Ovary (tissue), 10 donors: ENCODE measurements at regions of chr19 and their contacts with region 1.

Region 1: DNA sequence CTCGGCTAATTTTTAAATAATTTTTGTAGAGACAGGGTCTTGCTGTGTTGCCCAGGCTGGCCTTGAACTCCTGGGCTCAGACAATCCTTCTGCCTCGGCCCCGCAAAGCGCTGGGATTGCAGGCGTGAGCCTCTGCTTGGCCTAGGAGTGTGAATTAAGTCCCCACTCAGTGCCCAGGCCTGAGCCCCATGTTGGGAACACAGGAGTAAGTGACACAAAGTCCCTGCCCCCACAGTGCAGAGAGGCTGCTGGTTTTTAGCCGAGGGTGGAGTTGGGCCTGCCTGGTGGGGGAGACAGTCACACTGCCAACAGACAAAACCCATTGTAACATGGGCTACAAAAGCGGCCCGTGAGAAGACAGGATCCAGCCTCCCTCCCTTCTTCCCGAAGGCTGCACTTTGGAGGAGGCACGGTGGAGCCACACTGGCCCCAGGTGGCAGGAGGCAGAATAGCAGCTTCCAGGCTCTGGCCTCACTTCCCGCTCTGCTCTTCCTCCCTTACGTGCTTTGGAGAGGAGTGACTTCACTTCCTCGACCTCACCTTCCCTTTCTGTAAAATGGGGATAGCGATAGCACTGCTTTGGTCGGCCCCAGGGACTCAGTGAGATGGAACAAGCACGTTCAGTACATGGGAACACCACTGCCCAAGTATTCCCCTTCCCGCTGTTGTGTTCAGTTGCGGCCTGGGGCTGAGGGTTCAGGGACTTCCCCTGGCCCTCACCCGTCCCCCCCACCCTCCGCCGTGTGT is 15.2 kb upstream of the EHD2 start:
- DNase-seq: peak; percentile 68 to 84 (median 81)
- H3K4me3 ChIP-seq: no peak overlapping the region
- H3K27ac ChIP-seq: no peak overlapping the region
- H3K4me1 ChIP-seq: no peaks in the 10 kb centered on the region
- H3K27me3 ChIP-seq: no peaks in the 10 kb centered on the region
- CTCF ChIP-seq: peak; percentile 92 to 96 (median 95)
- EP300 ChIP-seq: no peak
- POLR2A ChIP-seq: peak; percentile 15

Region 2: GRCh38 chr19:47436712-47437401 is 261.2 kb before region 1 on chr19:
- intact Hi-C with region 1: loop called (anchors 2 to 5 kb)
- DNase-seq: peak; percentile 52 to 75 (median 71)
- H3K4me3 ChIP-seq: no peak overlapping the region
- H3K27ac ChIP-seq: no peak overlapping the region
- H3K4me1 ChIP-seq: no peaks in the 10 kb centered on the region
- H3K27me3 ChIP-seq: no peaks in the 10 kb centered on the region
- CTCF ChIP-seq: peak; percentile 47 to 73 (median 68)
- EP300 ChIP-seq: no peak
- POLR2A ChIP-seq: no peak

Region 3: GRCh38 chr19:47523473-47523872 is 174.6 kb before region 1 on chr19:
- intact Hi-C with region 1: loop called in 3 of 4 experiments (anchors 10 kb)
- DNase-seq: no peak
- H3K4me3 ChIP-seq: no peak overlapping the region
- H3K27ac ChIP-seq: no peak overlapping the region
- H3K4me1 ChIP-seq: peaks cover 3% of the 10 kb centered on the region
- H3K27me3 ChIP-seq: no peaks in the 10 kb centered on the region
- CTCF ChIP-seq: no peak
- EP300 ChIP-seq: no peak
- POLR2A ChIP-seq: no peak

Region 4: DNA sequence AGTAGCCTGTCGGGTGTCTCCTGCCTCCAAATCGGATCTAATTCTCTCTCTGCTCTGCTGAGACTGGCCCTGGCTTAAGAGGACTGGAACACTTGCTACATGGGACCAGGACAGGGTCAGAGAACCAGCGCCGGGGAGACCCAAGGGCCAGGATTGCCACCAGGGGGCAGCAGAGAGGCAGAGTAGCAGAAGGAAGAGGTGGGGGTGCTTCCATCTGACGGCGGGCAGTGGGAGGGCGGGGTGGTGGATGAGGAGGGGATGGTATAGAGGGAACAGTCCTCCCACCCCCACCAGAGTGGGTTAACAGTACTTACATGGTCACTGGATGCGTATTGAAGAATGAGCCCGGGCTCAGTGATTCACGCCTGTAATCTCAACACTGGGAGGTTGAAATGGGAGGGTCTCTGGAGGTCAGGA is 92.4 kb after region 1 on chr19:
- intact Hi-C with region 1: loop called in 1 of 4 experiments (anchors 10 kb)
- DNase-seq: peak; percentile 75 to 89 (median 84)
- H3K4me3 ChIP-seq: no peak overlapping the region
- H3K27ac ChIP-seq: no peak overlapping the region
- H3K4me1 ChIP-seq: no peaks in the 10 kb centered on the region
- H3K27me3 ChIP-seq: no peaks in the 10 kb centered on the region
- CTCF ChIP-seq: peak; percentile 42 to 62 (median 47)
- EP300 ChIP-seq: no peak
- POLR2A ChIP-seq: no peak